ENCODE measurements at regions of chr4 and their contacts with region 1.

Region 1: GRCh38 chr4:38948551-38948950 is 80.9 kb downstream of the FAM114A1 start:
- DNase-seq: no peak
- H3K4me3 Mint-ChIP-seq: no peak overlapping the region
- H3K27ac Mint-ChIP-seq: no peak overlapping the region
- H3K4me1 Mint-ChIP-seq: peaks cover 42% of the 10 kb centered on the region
- H3K27me3 Mint-ChIP-seq: no peaks in the 10 kb centered on the region

Region 2: GRCh38 chr4:38914854-38915253 is 33.7 kb before region 1 on chr4:
- intact Hi-C with region 1: loop called (anchors 5 kb)
- DNase-seq: peak; percentile 73
- H3K4me3 Mint-ChIP-seq: peak overlapping the region; percentile 56
- H3K27ac Mint-ChIP-seq: peak overlapping the region; percentile 83
- H3K4me1 Mint-ChIP-seq: peaks cover 12% of the 10 kb centered on the region
- H3K27me3 Mint-ChIP-seq: no peaks in the 10 kb centered on the region